WTC11 (cell line): ENCODE measurements at regions of chr19 and their contacts with region 1.

Region 1: DNA sequence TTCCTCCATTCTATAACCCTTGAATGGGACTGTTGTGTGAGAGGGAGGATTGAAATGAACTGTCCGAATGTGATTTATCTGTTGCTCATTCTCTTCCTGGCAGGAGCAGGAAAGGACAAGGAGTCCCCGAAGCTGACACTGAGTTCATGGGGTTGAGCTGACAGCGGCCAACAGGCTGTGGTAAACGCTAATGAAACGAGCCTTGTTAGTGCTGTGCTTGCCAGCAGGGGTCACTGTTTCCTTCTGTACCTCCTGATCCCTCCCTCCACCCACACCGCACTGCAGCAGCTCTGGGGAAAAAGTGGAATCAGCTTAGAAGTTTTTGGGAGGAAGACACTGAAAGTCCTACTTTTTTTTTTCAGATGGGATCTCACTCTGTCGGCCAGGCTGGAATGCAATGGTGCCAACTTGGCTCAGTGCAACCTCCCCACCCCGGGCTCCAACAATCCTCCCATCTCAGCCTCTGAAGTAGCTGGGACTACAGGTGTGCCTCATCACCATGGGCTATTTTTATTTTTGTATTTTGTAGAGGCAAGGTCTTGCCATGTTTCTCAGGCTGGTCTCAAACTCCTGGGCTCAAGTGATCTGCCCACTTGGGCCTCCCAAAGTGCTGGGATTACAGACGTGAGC is 6.7 kb upstream of the ZNF761 start:
- DNase-seq: peak; percentile 85
- ATAC-seq: peak; percentile 82
- H3K4me3 Mint-ChIP-seq: no peak overlapping the region
- H3K27ac Mint-ChIP-seq: peak overlapping the region; percentile 72
- H3K4me1 Mint-ChIP-seq: peaks cover 23% of the 10 kb centered on the region
- H3K27me3 Mint-ChIP-seq: no peaks in the 10 kb centered on the region
- CTCF ChIP-seq: peak; percentile 81

Region 2: DNA sequence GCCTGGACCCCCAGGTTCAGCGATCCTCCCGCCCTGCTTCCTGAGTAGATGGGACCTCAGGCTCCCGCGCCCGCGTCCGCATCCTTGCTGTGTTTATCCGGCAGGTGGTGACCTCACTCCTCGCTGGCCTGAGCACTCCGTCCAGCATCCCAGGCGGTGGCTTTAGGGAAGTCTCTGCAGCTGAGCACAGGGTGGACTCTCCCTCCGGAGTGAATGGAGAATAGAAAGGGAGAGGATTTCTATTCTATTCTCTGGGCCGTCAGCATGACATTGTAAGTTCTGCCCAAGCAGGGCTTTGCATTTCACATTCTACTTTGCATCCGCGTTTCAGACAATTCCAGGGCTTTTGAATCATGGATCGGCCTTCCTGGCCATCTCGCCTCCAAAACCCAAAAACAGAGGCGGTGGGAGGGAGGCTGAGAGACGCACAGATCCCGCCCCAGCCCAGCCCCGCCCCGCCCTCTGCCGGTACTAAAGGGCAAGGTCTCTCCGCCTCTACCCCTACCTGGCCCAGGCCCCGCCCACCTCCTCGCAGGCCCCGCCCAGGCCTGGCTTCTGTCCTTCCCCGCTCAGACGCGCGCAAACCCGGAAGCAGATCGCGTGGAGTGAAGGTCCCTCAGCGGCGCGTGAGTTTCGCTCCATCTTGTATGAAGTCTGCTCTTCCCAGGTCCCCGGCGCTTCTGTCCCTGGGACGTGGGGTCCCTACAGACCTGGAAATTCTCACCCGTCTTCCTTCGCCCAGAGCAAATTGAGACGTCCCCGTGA is 59.8 kb before region 1 on chr19 and contains the start of gene ZNF525:
- CTCF ChIA-PET with region 1: interaction called, 11 read pairs
- POLR2A ChIA-PET with region 1: no interaction called
- DNase-seq: peak; percentile 95
- ATAC-seq: peak; percentile 97
- H3K4me3 Mint-ChIP-seq: peak within 1 kb of the TSS; percentile 93
- H3K27ac Mint-ChIP-seq: peak within 1 kb of the TSS; percentile 95
- H3K4me1 Mint-ChIP-seq: peaks cover 48% of the 10 kb centered on the region
- H3K27me3 Mint-ChIP-seq: peaks cover 17% of the 10 kb centered on the region; the same call in 1 of the 2 replicates
- CTCF ChIP-seq: peak; percentile 69
- total RNA-seq, gene ZNF525: 46.9 to 59.7 TPM (median 48.6 TPM) in 3 replicates

Region 3: DNA sequence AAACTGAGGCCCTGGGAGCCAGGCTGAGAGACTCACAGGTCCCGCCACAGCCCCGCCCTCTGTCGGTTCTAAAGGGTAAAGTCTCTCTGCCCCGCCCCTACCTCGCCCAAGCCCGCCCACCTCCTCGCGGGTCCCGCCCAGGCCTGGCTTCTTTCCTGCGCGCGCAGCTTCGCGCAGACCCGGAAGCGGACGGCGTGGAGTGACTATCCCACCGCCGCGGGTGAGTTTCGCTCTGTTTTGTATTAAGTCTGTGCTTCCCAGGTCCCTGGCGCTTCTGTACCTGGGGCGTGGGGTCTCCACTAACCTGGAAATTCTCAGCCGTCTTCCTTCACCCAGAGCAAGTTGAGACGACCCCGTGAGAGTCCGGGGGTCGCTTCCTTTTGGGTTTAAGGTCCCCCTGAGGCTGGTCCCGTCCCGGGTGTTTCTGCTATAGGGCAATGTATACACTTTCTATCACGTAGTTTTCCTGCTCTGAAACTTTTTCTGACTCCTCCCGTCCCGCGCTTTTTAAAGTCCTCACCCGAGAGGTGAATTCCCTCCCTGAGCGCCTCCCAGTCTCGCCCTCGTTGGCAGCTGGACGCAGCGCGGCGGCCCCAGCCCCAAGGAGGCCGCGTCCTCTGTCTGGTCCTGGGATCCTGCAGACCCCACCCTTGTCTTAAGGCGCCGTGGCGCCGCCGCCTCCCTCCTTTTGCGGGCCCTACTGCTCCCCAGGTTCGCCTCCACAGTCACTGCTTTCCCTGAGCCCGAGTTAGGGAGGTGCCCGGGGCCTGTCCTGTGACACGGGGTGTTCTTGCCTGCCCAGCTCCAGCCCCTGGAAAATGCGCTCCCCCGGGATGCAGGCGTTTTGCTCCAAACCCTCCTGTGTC is 29.9 kb before region 1 on chr19 and contains the start of gene ZNF765:
- CTCF ChIA-PET with region 1: interaction called, 25 read pairs
- POLR2A ChIA-PET with region 1: no interaction called
- DNase-seq: peak; percentile 96
- ATAC-seq: peak; percentile 83
- H3K4me3 Mint-ChIP-seq: peak within 1 kb of the TSS; percentile 88
- H3K27ac Mint-ChIP-seq: peak within 1 kb of the TSS; percentile 96
- H3K4me1 Mint-ChIP-seq: peaks cover 43% of the 10 kb centered on the region
- H3K27me3 Mint-ChIP-seq: no peaks in the 10 kb centered on the region
- CTCF ChIP-seq: peak; percentile 49
- total RNA-seq, gene ZNF765: 18.3 to 23.6 TPM (median 19.6 TPM) in 3 replicates

Region 4: DNA sequence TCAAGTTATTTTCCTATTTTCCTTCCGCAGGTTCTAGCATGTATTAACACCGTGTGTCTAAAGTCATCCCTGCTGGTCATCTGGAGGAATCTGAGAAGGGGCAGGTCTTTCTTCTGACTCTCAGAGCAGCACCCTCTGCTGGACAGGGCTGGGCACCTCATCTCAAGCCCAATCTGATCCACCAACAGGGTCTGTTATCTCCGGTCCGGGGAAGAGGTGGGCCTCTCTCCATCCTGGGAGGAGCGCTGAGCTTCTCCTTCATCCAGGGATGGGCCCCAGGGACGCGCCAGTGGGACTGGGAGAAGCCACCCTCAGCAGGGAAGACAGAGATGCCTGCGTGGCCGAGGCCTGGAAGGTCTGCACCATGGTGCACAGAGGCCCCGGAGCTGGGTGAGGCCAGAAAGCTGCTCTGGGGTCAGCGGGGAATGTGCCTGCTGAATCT is 86.9 kb after region 1 on chr19:
- CTCF ChIA-PET with region 1: interaction called, 27 read pairs
- POLR2A ChIA-PET with region 1: no interaction called
- DNase-seq: peak; percentile 91
- ATAC-seq: peak; percentile 99
- H3K4me3 Mint-ChIP-seq: no peak overlapping the region
- H3K27ac Mint-ChIP-seq: no peak overlapping the region
- H3K4me1 Mint-ChIP-seq: peaks cover 7% of the 10 kb centered on the region
- H3K27me3 Mint-ChIP-seq: no peaks in the 10 kb centered on the region
- CTCF ChIP-seq: peak; percentile 78

Region 5: DNA sequence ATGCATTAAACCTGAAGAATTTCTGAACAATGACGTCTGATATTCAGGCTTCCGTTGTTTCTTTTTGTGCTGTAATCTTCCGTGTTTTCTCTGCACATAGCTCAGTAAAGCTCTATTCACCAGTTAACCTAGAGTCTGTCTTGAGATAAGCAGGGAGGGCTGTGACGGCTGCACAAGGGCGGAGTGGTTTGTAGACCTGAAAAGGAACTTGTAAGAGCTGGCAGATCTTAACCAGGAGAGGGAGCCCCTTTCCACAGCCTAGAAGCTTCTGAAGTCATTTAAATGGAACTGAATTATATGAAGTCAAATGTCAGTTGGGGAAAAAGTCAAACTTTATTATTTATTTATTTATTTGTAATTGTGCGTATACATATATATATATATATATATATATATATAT is 234.2 kb after region 1 on chr19:
- CTCF ChIA-PET with region 1: interaction called, 12 read pairs
- POLR2A ChIA-PET with region 1: no interaction called
- DNase-seq: peak; percentile 69
- ATAC-seq: peak; percentile 86
- H3K4me3 Mint-ChIP-seq: no peak overlapping the region
- H3K27ac Mint-ChIP-seq: peak overlapping the region; percentile 93
- H3K4me1 Mint-ChIP-seq: peaks cover 43% of the 10 kb centered on the region
- H3K27me3 Mint-ChIP-seq: peaks cover 8% of the 10 kb centered on the region
- CTCF ChIP-seq: peak; percentile 35; the same call in 1 of the 2 replicates